Activated CD4-positive, alpha-beta memory T cell treated with anti-CD3 and anti-CD28 coated beads for 36 hours (primary cell): ENCODE measurements at regions of chr14 and their contacts with region 1.

Region 1: DNA sequence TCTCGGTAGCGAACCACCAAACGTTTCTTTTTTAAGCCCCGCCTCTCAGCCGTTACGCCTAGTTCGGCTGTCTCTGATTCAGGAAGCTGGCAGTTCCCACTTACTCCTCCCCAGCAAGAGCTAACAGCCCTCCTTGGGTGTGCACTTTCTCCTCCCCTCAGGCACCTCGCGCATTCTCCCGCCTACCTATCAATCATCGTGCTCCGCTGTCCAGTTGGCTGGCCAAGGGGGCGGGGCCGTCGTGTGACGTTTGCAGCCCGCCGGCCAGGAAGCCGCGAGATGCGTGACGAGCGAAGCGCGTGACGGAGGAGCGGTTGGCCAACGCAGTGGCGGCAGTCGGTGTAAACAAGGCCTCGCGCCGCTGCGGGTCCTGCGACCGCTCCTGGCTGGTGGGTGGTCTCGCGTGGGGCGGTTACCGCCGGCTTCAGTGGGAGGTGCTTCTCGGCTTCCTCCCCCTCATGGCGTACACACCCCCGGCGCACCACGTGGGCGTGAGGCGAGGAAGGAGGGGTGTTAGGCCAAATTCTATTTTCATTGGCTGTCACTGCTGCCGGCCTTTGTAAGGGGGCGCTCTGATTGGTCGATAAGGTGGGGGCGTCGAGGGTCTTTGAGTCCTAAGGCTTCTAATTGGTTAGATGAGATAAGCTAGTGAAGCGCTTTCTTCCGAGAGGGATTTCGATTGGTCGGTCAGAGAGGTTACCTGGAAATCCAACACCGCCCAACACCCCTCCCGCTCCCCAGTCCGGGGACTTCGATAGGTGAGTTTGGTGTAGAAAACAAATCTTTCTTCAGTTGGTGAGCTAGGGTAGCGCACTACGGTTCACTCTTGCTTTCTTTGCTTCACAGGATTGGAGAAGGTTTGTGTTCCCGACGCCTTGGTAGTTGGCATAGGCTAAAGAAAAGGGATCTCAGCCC is at the starts of genes DCAF11 and NRL:
- DNase-seq: peak; percentile 99
- H3K4me3 Mint-ChIP-seq: peak within 1 kb of the TSS; percentile 95
- H3K27ac Mint-ChIP-seq: peak within 1 kb of the TSS; percentile 100
- H3K4me1 Mint-ChIP-seq: peaks cover 24% of the 10 kb centered on the region
- H3K27me3 Mint-ChIP-seq: no peaks in the 10 kb centered on the region
- total RNA-seq, gene DCAF11: 85.6 to 91.8 TPM
- total RNA-seq, gene NRL: 1.2 to 1.9 TPM

Region 2: DNA sequence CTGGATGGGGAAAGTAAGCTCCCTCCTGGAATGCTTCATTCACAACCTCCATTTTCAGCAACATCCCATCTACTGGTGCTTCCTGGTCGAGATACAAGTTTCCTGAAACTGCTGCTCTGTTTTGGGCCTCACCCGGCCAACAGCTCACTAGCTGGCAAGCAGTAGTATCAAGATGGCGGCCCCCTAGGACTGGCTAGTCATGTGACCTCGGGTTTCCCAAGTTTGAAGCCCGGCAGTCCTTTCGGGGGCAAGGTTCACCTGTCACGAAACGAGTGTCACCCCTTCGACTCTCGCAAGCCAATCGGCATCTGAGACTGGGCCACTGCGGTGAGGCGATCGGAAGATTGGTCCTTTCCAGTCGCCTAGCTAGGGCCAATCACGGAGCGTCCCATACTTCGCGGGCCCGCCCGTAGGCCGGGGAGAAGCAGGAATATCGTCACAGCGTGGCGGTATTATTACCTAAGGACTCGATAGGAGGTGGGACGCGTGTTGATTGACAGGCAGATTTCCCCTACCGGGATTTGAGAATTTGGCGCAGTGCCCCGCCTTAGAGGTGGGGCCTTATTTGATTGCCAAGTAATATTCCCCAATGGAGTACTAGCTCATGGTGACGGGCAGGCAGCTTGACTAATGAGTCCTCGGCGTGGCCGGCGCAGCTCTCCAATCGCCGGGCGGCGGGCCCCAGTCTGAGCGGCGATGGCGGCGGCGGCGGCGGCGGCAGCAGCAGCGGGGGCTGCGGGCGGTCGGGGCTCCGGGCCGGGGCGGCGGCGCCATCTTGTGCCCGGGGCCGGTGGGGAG is 793.8 kb before region 1 on chr14 and contains the start of gene PABPN1:
- CTCF ChIA-PET with region 1: no interaction called
- POLR2A ChIA-PET with region 1: interaction called, 6 read pairs
- intact Hi-C with region 1: loop called (anchors 1 kb)
- DNase-seq: peak; percentile 99
- H3K4me3 Mint-ChIP-seq: peak within 1 kb of the TSS; percentile 92
- H3K27ac Mint-ChIP-seq: peak within 1 kb of the TSS; percentile 90
- H3K4me1 Mint-ChIP-seq: peaks cover 23% of the 10 kb centered on the region
- H3K27me3 Mint-ChIP-seq: no peaks in the 10 kb centered on the region
- total RNA-seq, gene PABPN1: 198 to 209 TPM

Region 3: DNA sequence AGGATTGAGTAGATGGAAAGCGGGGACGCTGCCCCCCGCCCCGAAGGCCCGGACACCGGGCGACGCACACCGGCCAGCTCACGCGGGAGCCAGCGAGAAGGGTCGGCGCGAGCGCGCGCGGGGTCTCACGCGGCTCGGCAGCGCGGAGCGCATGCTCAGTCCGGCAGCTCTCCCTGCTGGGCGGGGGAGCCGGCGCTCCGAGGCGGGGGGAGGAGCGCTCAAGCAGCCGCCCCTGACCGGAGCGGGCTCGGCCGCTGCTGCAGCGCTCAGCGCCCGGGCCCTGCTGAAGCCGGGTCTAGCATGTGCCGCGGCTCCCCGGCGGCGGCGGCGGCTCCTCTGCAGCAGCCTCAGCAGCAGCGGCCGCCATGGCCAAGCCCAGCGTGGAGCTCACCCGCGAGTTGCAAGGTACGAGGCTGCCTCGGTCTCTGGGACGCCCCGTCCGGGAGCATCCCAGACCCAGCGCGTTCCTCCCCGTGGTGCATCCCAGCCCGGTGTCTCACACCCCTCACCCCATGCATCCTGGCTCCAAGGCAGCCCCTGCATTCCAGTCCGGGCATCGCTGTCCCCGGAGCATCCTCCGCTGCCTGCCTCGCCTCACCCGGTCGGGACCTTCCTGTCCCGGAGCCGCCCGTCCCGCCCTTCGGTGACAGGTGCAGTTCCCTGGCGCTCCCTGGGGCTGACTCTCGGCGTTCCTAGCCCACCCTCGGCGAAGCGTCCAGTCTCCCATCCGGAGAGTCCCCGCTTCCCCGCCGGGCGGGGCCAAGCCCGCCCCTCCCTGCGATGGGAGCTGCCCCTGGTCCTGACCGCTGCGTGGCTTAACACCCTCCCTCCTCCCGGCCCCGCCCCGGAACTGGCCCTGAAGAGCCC is 62.8 kb before region 1 on chr14 and contains the start of gene CARMIL3:
- CTCF ChIA-PET with region 1: interaction called, 261 read pairs
- POLR2A ChIA-PET with region 1: interaction called, 18 read pairs
- intact Hi-C with region 1: loop called (anchors 2 kb)
- DNase-seq: peak; percentile 74
- H3K4me3 Mint-ChIP-seq: peak within 1 kb of the TSS; percentile 70
- H3K27ac Mint-ChIP-seq: no peak within 1 kb of the TSS
- H3K4me1 Mint-ChIP-seq: peaks cover 20% of the 10 kb centered on the region
- H3K27me3 Mint-ChIP-seq: peaks cover 4% of the 10 kb centered on the region
- total RNA-seq, gene CARMIL3: 0.75 to 1.00 TPM

Region 4: DNA sequence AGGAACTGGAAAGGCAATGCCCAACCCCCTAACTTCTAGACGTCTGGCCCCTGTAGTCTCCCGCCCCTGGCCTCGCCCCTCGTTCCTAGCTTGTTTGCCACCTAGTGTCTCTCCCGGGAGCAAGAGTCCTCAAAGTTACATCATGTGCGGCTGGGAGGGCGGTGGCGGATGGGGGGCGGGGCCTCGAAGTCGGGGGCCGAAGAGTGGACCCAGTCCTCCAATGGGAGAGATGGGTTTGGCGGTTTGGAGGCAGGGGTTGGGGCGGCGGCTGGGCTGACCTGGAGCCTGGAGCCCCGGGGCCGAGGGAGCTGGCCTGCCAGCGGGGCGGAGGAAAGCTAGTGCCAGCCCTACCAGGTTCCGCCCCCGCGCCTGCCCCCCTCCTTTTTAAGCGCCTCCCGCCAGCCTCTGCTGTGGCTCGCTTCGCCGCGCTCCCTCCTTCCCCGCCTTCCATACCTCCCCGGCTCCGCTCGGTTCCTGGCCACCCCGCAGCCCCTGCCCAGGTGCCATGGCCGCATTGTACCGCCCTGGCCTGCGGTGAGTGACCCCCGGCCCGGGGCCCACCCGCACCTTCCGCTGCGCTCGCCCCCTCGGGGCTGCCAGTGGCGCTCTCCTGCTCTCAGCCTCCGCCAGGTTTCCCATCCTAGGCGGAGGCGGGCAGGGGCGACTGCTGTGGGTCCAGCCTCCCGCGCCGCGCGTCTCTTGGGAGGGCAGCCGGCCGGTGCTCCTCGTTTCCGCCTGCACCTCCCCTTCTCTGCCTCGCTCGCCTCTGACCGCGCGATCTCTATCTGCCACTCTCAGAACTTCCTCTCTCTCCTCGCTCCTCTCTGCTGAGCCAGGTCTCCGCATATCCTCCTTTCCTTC is 20.7 kb before region 1 on chr14 and contains the start of gene PCK2:
- CTCF ChIA-PET with region 1: interaction called, 241 read pairs
- POLR2A ChIA-PET with region 1: interaction called, 46 read pairs
- intact Hi-C with region 1: loop called (anchors 1 kb)
- DNase-seq: peak; percentile 94
- H3K4me3 Mint-ChIP-seq: peak within 1 kb of the TSS; percentile 94
- H3K27ac Mint-ChIP-seq: peak within 1 kb of the TSS; percentile 97
- H3K4me1 Mint-ChIP-seq: peaks cover 28% of the 10 kb centered on the region
- H3K27me3 Mint-ChIP-seq: no peaks in the 10 kb centered on the region
- total RNA-seq, gene PCK2: 118 to 125 TPM

Region 5: GRCh38 chr14:24146978-24147760 is 32.4 kb after region 1 on chr14 and contains the start of gene RNF31:
- CTCF ChIA-PET with region 1: interaction called, 16 read pairs
- POLR2A ChIA-PET with region 1: interaction called, 38 read pairs
- intact Hi-C with region 1: loop called (anchors 1 kb)
- DNase-seq: peak; percentile 99
- H3K4me3 Mint-ChIP-seq: peak within 1 kb of the TSS; percentile 100
- H3K27ac Mint-ChIP-seq: peak within 1 kb of the TSS; percentile 99
- H3K4me1 Mint-ChIP-seq: peaks cover 56% of the 10 kb centered on the region
- H3K27me3 Mint-ChIP-seq: no peaks in the 10 kb centered on the region
- total RNA-seq, gene RNF31: 75.5 to 80.4 TPM

Region 6: DNA sequence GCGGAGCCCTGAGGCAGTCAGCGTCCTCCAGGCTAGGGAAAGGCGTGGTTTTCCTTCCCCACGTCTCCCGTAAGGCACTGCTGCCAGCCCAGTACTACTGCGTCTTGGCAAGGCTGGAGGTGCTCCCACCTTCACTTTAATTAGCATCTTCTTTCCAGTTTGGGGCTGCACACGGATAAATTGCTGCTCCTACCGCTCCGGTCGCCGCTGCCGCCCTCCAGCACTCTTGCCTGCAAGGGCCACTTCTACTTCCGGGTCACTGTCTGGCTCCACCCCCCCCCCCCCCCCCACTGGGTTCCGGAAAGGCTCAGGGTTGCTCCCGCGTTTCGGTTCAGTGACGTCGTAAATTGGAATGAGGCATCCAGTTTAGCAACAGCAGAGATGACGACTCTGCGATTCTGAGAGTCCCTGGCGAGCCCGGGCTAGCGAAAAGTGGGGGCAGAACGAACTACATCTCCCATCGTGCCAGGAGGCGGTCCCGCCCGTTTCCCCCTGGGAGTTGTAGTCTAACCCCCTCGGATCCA is 117.4 kb after region 1 on chr14 and contains the start of gene NEDD8:
- CTCF ChIA-PET with region 1: interaction called, 3 read pairs
- POLR2A ChIA-PET with region 1: no interaction called
- intact Hi-C with region 1: loop called (anchors 1 kb)
- DNase-seq: peak; percentile 96
- H3K4me3 Mint-ChIP-seq: peak within 1 kb of the TSS; percentile 93
- H3K27ac Mint-ChIP-seq: peak within 1 kb of the TSS; percentile 90
- H3K4me1 Mint-ChIP-seq: peaks cover 55% of the 10 kb centered on the region
- H3K27me3 Mint-ChIP-seq: no peaks in the 10 kb centered on the region
- total RNA-seq, gene NEDD8: 202 to 213 TPM